GM10248 (cell line): ENCODE measurements at regions of chr2 and their contacts with region 1.

Region 1: DNA sequence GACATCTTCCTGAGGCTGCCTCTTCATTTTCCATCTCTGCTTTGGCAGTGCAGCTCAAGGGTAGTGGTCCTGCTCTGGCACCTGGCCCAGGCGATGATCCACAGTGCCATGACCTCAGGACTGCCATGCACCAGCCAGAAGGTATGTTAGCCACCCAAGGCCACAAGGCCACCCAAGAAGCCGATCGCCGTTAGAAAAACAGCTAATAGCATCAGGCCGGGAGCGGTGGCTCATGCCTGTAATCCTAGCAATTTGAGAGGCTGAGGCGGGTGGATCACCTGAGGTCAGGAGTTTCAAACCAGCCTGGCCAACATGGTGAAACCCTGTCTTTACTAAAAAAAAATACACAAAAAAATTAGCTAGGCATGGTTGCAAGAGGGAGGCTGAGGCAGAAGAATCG is 28.4 kb upstream of the UGGT1 start:
- DNase-seq: no peak
- CTCF ChIP-seq: no peak

Region 2: GRCh38 chr2:127943186-127943585 is 119.4 kb before region 1 on chr2:
- CTCF ChIA-PET with region 1: no interaction called
- POLR2A ChIA-PET with region 1: no interaction called
- DNase-seq: no peak
- CTCF ChIP-seq: no peak

Region 3: DNA sequence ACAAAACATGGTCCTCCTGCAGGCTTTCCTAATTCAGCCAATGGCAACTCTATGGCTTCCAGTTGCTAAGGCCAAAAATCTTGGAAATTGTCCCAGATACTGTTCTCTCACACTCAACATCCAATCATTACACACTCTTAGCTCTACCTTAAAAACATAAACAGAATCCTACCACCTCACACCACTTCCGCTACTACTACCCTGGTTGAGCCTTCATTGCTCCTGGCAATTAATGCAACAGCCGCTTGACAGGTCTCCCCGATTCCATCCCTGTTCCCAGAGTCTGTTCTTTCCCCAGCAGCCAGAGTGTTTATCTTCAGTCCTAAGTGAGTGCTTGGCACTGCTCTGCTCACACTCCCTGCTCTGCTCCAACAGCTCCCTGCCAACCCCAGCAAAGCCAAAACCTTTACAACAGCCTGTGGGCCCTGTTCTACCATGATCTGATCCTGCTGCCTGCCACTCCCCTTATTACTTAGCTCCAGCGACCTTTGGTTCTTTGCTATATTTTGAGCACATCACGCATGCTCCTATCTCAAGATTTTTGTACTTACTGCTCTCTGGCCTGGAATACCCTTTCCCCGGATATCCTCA is 109.3 kb before region 1 on chr2:
- CTCF ChIA-PET with region 1: no interaction called
- POLR2A ChIA-PET with region 1: no interaction called
- DNase-seq: no peak
- CTCF ChIP-seq: no peak

Region 4: DNA sequence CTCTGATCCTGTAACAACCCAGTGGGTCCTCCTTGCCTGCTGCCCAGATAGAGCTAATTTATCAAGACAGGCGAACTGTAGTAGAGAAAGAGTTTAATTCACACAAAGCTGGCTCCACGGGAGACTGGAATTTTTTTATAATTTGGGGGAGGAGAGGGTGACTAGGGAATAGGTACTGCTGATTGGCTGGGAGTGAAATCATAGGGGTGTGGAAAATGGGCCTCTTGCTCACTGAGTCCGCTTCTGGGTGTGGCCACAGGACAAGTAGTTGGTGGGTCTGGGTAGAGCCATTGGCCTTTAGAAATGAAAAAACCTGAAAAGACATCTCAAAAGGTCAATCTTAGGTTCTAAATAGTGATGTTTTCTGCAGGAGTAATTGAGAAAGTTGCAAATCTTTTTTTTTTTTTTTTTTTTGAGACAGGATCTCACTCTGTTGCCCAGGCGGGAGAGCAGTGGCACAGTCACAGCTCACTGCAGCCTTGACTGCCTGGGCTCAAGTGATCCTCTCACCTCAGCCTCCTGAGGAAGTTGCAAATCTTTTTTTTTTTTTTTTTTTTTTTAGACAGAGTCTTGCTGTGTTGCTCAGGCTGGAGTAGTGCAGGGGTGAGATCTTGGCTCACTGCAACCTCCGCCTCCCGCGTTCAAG is 14.0 kb after region 1 on chr2:
- CTCF ChIA-PET with region 1: interaction called, 26 read pairs
- POLR2A ChIA-PET with region 1: no interaction called
- DNase-seq: no peak
- CTCF ChIP-seq: no peak

Region 5: GRCh38 chr2:128090945-128091725 is 28.6 kb after region 1 on chr2 and contains the start of gene UGGT1:
- CTCF ChIA-PET with region 1: interaction called, 15 read pairs
- POLR2A ChIA-PET with region 1: no interaction called
- DNase-seq: peak; percentile 97
- CTCF ChIP-seq: no peak

Region 6: GRCh38 chr2:128232965-128233789 is 170.6 kb after region 1 on chr2:
- CTCF ChIA-PET with region 1: interaction called, 22 read pairs
- POLR2A ChIA-PET with region 1: no interaction called
- DNase-seq: peak; percentile 96
- CTCF ChIP-seq: peak; percentile 92

Region 7: DNA sequence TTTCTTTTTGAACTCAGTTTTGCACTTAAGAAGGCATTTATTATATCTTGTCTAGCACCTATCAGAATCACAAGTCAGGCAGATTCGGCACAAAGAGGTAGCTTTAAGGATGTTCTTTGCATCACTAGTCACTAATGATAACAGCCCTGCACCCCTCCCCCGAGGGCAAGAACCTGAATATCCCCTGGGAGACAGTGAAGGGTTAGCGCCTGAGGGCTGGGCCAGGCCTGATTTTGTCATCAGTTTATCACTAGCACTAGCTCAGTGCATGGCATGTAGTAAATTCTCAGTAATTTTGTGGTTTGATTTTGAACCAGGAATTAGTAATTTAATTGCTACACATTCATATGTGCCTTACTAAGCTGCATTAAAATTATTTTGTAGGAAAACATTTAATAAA is 280.0 kb after region 1 on chr2:
- CTCF ChIA-PET with region 1: no interaction called
- POLR2A ChIA-PET with region 1: no interaction called
- DNase-seq: no peak
- CTCF ChIP-seq: no peak